Breast epithelium (tissue), 4 donors: ENCODE measurements at regions of chr10 and their contacts with region 1.

Region 1: GRCh38 chr10:91724933-91725332 is 73.3 kb upstream of the TNKS2 start:
- DNase-seq: no peak
- H3K4me3 ChIP-seq: no peak overlapping the region
- H3K27ac ChIP-seq: no peak overlapping the region
- H3K4me1 ChIP-seq: no peaks in the 10 kb centered on the region
- H3K27me3 ChIP-seq: no peaks in the 10 kb centered on the region
- CTCF ChIP-seq: no peak
- POLR2A ChIP-seq: no peak

Region 2: DNA sequence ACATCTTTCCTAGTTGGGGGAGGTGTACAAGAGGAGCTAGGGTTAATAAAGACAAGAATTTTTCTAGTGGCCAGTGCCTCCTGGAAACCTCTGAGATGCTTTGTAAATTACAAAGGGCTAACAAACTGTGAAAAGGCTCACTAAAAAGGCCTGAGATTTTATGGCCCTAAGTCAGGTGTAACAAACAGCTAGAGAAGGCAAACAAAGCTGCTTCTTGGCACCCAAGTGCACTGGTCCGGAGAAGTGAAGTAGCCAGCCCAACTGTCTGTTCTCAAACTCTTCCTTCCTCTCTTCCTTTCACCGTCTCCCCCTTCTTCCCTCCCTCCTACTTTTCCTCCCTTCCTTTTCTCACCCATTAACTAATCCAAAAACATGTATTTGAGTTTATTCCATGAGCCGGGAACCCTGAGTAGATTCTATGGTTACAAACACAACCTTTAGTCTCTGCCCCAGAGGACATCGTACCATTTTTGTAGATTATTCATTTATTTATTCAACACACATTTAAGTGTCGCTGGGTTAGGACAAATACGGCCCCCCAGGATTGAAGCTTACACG is 647.9 kb before region 1 on chr10:
- intact Hi-C with region 1: no loop called
- DNase-seq: no peak
- H3K4me3 ChIP-seq: no peak overlapping the region
- H3K27ac ChIP-seq: peak overlapping the region; percentile 2 to 40
- H3K4me1 ChIP-seq: no peaks in the 10 kb centered on the region
- H3K27me3 ChIP-seq: no peaks in the 10 kb centered on the region
- CTCF ChIP-seq: no peak
- POLR2A ChIP-seq: no peak

Region 3: GRCh38 chr10:91227576-91227975 is 497.4 kb before region 1 on chr10:
- intact Hi-C with region 1: no loop called
- DNase-seq: no peak
- H3K4me3 ChIP-seq: no peak overlapping the region
- H3K27ac ChIP-seq: no peak overlapping the region
- H3K4me1 ChIP-seq: no peaks in the 10 kb centered on the region
- H3K27me3 ChIP-seq: no peaks in the 10 kb centered on the region
- CTCF ChIP-seq: no peak
- POLR2A ChIP-seq: no peak

Region 4: GRCh38 chr10:91652364-91652763 is 72.6 kb before region 1 on chr10:
- intact Hi-C with region 1: loop called (anchors 2 kb)
- DNase-seq: peak in 1 of 2 donors; percentile 63
- H3K4me3 ChIP-seq: no peak overlapping the region
- H3K27ac ChIP-seq: peak overlapping the region; percentile 59 to 62
- H3K4me1 ChIP-seq: peaks cover 0 to 11% of the 10 kb centered on the region in 2 donors
- H3K27me3 ChIP-seq: no peaks in the 10 kb centered on the region
- CTCF ChIP-seq: no peak
- POLR2A ChIP-seq: no peak

Region 5: GRCh38 chr10:91700788-91701444 is 24.0 kb before region 1 on chr10:
- intact Hi-C with region 1: no loop called
- DNase-seq: no peak
- H3K4me3 ChIP-seq: no peak overlapping the region
- H3K27ac ChIP-seq: no peak overlapping the region
- H3K4me1 ChIP-seq: no peaks in the 10 kb centered on the region
- H3K27me3 ChIP-seq: no peaks in the 10 kb centered on the region
- CTCF ChIP-seq: no peak
- POLR2A ChIP-seq: no peak

Region 6: DNA sequence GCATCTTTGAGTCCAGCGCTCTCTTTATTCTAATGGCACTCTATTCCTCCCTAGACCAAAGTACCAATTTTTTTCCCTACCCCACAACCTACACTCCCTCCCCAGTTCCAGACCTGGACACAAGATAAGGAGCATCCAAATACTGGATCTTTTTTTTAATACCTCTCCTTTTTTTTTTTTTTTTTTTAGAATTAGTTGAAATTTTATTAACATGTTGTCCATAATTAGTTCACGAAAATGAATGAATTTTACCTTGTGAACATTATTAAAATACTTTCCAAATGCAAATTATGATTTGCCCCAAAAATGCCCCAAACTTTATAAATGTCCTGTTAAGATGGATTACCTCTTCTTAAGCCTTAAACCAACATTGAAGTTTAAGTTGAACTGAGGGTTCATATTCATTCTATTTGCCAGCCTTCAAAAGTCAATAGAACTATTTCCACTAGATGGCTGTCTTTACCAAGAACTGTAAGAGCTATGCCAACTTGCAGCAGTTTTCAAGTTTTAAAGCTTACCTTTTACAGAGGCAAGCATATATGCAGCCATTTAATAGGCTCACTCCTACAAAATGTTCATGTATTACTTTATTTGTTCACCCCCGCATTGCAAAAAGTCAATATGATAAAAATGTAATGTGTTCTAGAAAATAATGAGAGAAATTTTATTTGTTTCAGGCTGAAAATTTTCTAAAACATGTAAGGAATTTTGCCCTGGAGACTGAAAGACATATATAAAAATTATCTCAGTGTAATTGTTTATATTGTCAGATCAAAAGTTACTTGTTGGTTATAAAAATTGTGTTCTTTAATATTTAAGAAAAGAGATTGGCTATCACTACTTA is 33.6 kb after region 1 on chr10:
- intact Hi-C with region 1: no loop called
- DNase-seq: no peak
- H3K4me3 ChIP-seq: no peak overlapping the region
- H3K27ac ChIP-seq: no peak overlapping the region
- H3K4me1 ChIP-seq: no peaks in the 10 kb centered on the region
- H3K27me3 ChIP-seq: no peaks in the 10 kb centered on the region
- CTCF ChIP-seq: peak in 2 of 3 donors; percentile 46 to 57
- POLR2A ChIP-seq: no peak